PC-3 (cell line): ENCODE measurements at regions of chr1 and their contacts with region 1.

Region 1: GRCh38 chr1:218025454-218025853 is 259.6 kb upstream of the RRP15 start:
- DNase-seq: peak; percentile 99
- ATAC-seq: peak; percentile 97
- H3K4me3 ChIP-seq: no peak overlapping the region
- H3K27ac ChIP-seq: peak overlapping the region; percentile 52
- H3K4me1 ChIP-seq: peaks cover 32% of the 10 kb centered on the region
- H3K27me3 ChIP-seq: no peaks in the 10 kb centered on the region
- CTCF ChIP-seq: no peak; the same call in 1 of the 2 replicates

Region 2: DNA sequence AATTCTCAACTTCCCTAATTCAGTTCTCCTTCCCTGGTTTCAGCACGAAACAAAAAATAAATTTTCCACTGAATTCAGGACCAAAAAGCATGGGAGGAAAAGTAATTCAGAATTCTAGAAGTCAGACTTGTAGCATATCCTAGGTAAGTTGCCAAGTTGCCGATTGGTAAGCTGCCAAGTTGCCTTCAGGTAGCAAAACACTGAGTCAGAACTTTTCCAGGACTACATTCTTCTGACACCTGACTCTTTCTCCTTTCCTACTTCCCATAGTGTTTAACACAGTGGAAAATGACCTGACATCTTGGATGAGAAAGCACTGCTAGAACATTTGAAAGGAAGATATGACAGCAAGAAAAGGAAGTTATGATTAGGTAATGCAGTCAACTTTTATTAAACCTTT is 71.5 kb before region 1 on chr1:
- CTCF ChIA-PET with region 1: no interaction called
- POLR2A ChIA-PET with region 1: no interaction called
- intact Hi-C with region 1: loop called (anchors 2 kb)
- DNase-seq: peak; percentile 100
- ATAC-seq: peak; percentile 89
- H3K4me3 ChIP-seq: peak overlapping the region; percentile 11; the same call in 1 of the 2 replicates
- H3K27ac ChIP-seq: peak overlapping the region; percentile 52
- H3K4me1 ChIP-seq: peaks cover 21% of the 10 kb centered on the region
- H3K27me3 ChIP-seq: no peaks in the 10 kb centered on the region
- CTCF ChIP-seq: no peak

Region 3: DNA sequence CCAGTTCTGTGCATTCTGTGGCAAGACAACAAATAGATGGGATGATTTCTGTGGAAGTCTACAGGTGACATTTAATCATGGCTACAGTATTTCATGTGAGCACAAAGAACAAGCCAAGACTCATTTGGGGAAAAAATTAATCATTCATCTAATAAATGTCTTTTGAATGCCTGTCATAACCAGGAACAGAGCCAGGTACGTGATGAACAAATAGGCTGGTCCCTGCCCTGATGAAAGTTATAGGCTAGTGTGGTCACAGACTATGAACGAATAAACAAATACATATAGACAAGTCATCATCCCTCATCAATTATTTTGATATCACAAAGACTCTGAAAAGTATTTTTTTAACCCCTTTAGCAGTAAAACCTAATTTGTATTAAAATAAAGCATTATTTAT is 33.3 kb after region 1 on chr1:
- CTCF ChIA-PET with region 1: no interaction called
- POLR2A ChIA-PET with region 1: no interaction called
- intact Hi-C with region 1: loop called (anchors 2 kb)
- DNase-seq: peak; percentile 97
- ATAC-seq: peak; percentile 96
- H3K4me3 ChIP-seq: no peak overlapping the region
- H3K27ac ChIP-seq: peak overlapping the region; percentile 6
- H3K4me1 ChIP-seq: peaks cover 9% of the 10 kb centered on the region
- H3K27me3 ChIP-seq: no peaks in the 10 kb centered on the region
- CTCF ChIP-seq: no peak